HEK293T (cell line): ENCODE measurements at regions of chr5 and their contacts with region 1.

Region 1: DNA sequence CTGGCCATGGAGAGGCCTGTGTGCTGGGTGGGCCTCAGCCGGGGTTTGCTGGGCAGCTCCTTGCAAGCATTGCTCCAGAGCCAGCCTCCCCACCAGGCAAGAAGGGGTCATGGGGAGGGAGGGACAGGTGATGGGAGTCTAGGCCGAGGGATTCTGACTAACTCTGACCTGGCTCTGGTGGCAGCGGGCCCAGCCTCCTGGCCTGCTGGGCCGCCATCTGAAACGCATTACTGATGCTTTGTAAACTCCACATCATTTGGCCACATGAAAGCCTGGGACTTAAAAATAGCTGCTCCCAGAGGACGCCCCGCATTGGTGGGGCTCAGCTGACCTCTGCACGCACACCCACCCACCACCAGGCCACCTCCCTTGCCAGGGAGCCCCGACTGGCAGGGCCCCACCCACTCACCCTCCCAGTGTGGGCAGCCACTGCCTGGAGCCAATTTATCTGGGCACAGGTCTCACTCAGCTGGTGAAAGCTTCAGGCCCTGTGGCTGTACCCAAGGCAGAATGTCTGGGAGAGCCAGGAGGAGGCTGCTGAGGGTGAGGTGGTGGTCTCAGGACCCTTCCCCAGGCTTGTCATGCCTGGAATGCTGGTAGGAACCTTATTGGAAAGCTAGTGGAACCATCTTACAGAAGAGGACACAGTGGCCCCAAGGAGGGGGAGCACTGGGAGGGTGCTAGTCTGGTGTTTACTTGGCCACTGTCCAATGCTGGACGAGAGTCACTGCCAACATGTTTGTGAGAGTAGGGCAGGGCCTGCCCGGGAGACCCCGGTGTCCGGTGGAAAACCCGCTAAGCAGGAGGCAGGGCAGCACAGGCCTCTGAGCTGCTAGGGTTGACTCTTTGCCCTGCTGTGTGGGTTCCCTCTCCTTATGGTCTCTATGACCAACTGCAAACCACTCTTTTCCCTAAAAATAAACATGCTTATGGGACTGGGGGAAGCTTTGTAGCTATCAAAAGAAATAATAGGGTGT is 10.8 kb downstream of the TCF7 start:
- DNase-seq: no peak

Region 2: DNA sequence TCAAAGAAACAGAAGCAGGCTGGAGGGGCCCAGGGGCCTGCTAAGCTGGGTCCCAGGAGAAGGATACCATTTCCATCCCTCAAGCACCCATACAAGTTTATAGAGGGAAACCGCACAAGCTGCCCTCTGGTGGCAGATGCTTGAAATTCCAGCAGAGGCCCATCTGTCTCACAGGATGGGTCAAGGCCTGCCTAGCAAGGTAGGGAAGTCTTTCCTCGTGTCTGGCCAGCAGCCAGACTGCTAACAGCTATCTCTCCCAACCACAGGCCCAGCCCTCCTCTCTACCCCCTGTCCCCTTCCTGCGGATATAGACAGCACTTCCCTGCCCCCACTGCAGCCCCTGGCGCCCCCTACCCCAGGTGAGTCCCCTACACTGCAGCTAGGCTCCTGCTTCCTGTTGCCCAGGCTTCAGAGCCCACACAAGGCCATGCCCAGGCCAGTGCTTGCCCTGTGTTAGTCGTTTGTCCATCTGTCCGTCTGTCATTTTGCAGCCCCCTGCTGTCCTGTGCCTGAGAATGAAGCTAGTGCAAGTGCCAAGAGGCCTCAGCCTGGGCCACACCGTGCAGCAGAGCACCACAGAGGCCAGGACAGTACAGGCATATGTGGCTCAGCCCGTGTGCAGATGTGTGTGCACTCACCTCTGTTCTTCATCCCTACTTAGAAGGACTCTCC is 15.3 kb after region 1 on chr5:
- CTCF ChIA-PET with region 1: interaction called, 14 read pairs
- POLR2A ChIA-PET with region 1: interaction called, 3 read pairs
- DNase-seq: peak; percentile 58